Right cardiac atrium (tissue), 5 donors: ENCODE measurements at regions of chr10 and their contacts with region 1.

Region 1: DNA sequence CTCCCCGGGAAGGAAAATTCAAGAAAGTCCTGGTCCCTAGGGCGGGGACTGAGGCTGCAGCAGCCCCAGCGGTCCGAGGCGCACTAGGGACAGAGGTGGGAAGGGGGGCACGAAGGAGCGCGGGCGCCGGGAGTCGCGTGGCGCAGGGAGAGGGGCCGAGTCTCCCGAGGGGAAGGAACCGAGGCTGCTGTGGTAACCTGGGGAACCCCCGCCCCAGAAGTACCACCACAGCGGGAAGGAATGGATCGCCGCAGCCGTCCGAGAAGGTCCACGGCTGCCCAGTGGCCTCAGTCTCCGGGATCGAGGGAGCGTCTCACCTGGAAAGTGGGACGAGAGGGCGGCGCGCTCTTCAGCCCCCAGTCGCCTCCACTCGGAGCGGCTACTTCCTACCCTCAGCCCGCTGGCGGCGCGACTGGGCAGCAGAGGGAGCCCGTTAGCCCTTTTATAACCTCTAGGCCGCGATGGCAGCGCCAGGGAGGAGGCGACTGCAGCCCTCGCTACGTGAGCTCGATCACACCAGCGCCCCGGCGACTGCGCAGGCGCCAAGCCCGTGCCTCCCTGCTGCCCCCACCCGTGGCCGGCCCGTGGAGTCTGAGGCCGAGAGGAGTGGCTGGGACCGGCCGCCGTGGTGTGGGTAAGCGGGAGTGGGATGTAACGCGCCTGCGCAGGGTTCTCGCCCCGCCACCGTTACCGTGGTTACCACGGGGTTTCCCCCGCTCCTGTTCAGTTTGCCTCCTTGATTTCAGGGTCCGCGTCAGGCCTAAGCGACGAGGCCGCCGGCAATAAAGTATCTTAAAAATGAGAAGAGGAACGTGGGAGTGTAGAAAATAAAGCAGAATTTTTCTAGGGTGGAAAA is at the start of gene P4HA1:
- DNase-seq: peak; percentile 100
- ATAC-seq: peak; percentile 98
- H3K4me3 ChIP-seq: peak within 1 kb of the TSS; percentile 68
- H3K27ac ChIP-seq: peak within 1 kb of the TSS; percentile 93
- H3K4me1 ChIP-seq: no peaks in the 10 kb centered on the region
- H3K27me3 ChIP-seq: no peaks in the 10 kb centered on the region
- total RNA-seq, gene P4HA1: 37.4 to 55.8 (median 43.9) TPM

Region 2: GRCh38 chr10:72951760-72952159 is 144.9 kb before region 1 on chr10:
- intact Hi-C with region 1: no loop called
- DNase-seq: no peak
- ATAC-seq: peak in 1 of 2 donors; percentile 30
- H3K4me3 ChIP-seq: no peak overlapping the region
- H3K27ac ChIP-seq: no peak overlapping the region
- H3K4me1 ChIP-seq: no peaks in the 10 kb centered on the region
- H3K27me3 ChIP-seq: no peaks in the 10 kb centered on the region

Region 3: DNA sequence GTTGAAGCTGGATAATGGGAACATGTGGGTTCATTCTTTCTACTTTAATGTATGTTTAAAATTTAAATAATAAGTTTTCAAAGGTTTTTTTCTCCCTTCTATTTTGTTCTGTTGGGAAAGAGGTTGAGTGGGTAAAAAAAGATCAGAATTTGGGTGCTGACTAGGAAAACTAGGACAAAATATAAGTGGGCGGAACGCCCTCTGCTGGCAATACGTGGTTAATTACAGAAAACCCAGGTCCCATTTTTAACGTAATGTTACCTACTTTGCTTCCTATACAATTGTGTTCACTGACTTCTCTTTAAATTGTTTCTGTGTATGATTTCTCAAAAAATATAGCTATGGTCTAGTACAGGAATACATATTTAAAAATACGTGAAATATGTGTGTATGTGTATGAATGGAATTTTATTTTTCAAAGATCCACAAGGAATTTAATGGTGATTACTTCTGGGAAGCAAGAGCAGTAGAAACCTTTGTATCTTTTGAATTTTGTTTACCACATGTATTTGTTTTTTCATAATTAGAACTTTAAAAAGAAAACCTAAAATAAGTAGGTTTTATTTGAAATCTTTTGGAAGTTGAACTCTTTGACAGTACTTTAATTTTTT is 62.5 kb after region 1 on chr10:
- intact Hi-C with region 1: loop called in 2 of 4 experiments (anchors 5 to 10 kb)
- DNase-seq: peak in 2 of 3 donors; percentile 46 to 71
- ATAC-seq: no peak
- H3K4me3 ChIP-seq: no peak overlapping the region
- H3K27ac ChIP-seq: no peak overlapping the region
- H3K4me1 ChIP-seq: no peaks in the 10 kb centered on the region
- H3K27me3 ChIP-seq: no peaks in the 10 kb centered on the region

Region 4: GRCh38 chr10:73167783-73168464 is 71.2 kb after region 1 on chr10 and contains the starts of genes ECD and FAM149B1:
- intact Hi-C with region 1: loop called in 2 of 4 experiments (anchors 5 to 10 kb)
- DNase-seq: peak; percentile 95 to 97 (median 97)
- ATAC-seq: peak; percentile 99
- H3K4me3 ChIP-seq: peak within 1 kb of the TSS; percentile 96
- H3K27ac ChIP-seq: peak within 1 kb of the TSS; percentile 99
- H3K4me1 ChIP-seq: peaks cover 2% of the 10 kb centered on the region
- H3K27me3 ChIP-seq: no peaks in the 10 kb centered on the region
- total RNA-seq, gene ECD: 16.2 to 19.3 (median 17.9) TPM
- total RNA-seq, gene FAM149B1: 11.6 to 17.5 (median 15.1) TPM